CD8-positive, alpha-beta T cell (primary cell): ENCODE measurements at regions of chr2 and their contacts with region 1.

Region 1: GRCh38 chr2:27032495-27033252 is at the start of gene TMEM214:
- DNase-seq: peak; percentile 44 to 87 (median 77)
- ATAC-seq: peak; percentile 94
- H3K4me3 ChIP-seq: peak within 1 kb of the TSS; percentile 84 to 97
- H3K4me3 Mint-ChIP-seq: peak within 1 kb of the TSS; percentile 95
- H3K27ac ChIP-seq: peak within 1 kb of the TSS; percentile 67 to 78
- H3K27ac Mint-ChIP-seq: peak within 1 kb of the TSS; percentile 91
- H3K4me1 ChIP-seq: peaks cover 20% of the 10 kb centered on the region
- H3K4me1 Mint-ChIP-seq: peaks cover 39% of the 10 kb centered on the region
- H3K27me3 ChIP-seq: no peaks in the 10 kb centered on the region
- H3K27me3 Mint-ChIP-seq: no peaks in the 10 kb centered on the region
- CTCF ChIP-seq: no peak
- total RNA-seq, gene TMEM214: 26.5 to 27.4 TPM

Region 2: GRCh38 chr2:27050281-27050995 is 17.8 kb after region 1 on chr2:
- CTCF ChIA-PET with region 1: interaction called, 3 read pairs
- POLR2A ChIA-PET with region 1: interaction called, 25 read pairs
- intact Hi-C with region 1: loop called (anchors 1 kb)
- DNase-seq: peak; percentile 85 to 97 (median 93)
- ATAC-seq: peak; percentile 64
- H3K4me3 ChIP-seq: peak overlapping the region; percentile 78 to 83
- H3K4me3 Mint-ChIP-seq: peak overlapping the region; percentile 99
- H3K27ac ChIP-seq: peak overlapping the region; percentile 74 to 88
- H3K27ac Mint-ChIP-seq: peak overlapping the region; percentile 99
- H3K4me1 ChIP-seq: peaks cover 10% of the 10 kb centered on the region
- H3K4me1 Mint-ChIP-seq: peaks cover 9% of the 10 kb centered on the region
- H3K27me3 ChIP-seq: no peaks in the 10 kb centered on the region
- H3K27me3 Mint-ChIP-seq: peaks cover 2% of the 10 kb centered on the region
- CTCF ChIP-seq: peak; percentile 28

Region 3: GRCh38 chr2:27079233-27080139 is 46.8 kb after region 1 on chr2:
- CTCF ChIA-PET with region 1: no interaction called
- POLR2A ChIA-PET with region 1: interaction called, 5 read pairs
- intact Hi-C with region 1: loop called (anchors 1 to 2 kb)
- DNase-seq: no peak
- ATAC-seq: no peak
- H3K4me3 ChIP-seq: no peak overlapping the region
- H3K4me3 Mint-ChIP-seq: no peak overlapping the region
- H3K27ac ChIP-seq: no peak overlapping the region
- H3K27ac Mint-ChIP-seq: no peak overlapping the region
- H3K4me1 ChIP-seq: peaks cover 37% of the 10 kb centered on the region
- H3K4me1 Mint-ChIP-seq: peaks cover 34% of the 10 kb centered on the region
- H3K27me3 ChIP-seq: no peaks in the 10 kb centered on the region
- H3K27me3 Mint-ChIP-seq: no peaks in the 10 kb centered on the region
- CTCF ChIP-seq: no peak

Region 4: DNA sequence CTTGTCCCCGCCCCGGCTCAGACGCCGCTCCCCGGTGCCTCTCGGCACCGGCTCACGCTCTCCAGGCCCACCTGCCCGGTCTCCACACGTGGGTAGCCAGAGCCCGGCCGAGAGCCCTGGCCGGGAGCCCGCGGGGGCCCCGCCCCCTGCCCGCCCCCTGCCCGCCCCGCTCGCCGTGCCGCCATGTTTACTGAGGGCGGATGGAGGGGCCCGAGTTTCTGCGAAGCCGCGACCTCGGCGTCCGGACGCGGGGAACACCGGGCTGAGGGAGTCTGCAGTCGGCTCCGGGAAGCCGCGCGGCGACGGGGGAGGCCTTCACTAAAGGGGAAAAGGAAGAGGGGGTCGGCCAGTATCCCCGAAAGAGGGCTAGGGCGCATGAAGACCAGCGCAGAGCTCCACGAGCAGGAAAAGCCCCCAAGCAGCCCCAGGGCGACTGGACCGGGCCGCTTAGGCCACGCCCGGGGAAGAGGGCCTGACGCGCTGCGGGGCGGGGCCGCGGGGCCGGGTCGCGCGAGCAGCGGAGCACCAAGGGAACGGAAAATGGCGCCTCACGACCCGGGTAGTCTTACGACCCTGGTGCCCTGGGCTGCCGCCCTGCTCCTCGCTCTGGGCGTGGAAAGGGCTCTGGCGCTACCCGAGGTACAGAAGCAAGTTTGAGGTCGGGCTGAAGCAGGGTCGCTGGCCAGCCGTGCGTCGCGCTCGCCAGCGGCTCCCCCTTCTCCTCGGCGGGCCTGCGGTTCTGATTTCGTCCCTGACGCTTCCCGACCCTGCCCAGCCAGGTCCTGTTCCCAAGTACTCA is 179.4 kb after region 1 on chr2 and contains the starts of genes ATRAID and SLC5A6:
- CTCF ChIA-PET with region 1: no interaction called
- POLR2A ChIA-PET with region 1: interaction called, 3 read pairs
- intact Hi-C with region 1: loop called (anchors 1 to 5 kb)
- DNase-seq: peak; percentile 78 to 94 (median 87)
- ATAC-seq: peak; percentile 84
- H3K4me3 ChIP-seq: peak within 1 kb of the TSS; percentile 67 to 99
- H3K4me3 Mint-ChIP-seq: peak within 1 kb of the TSS; percentile 100
- H3K27ac ChIP-seq: peak within 1 kb of the TSS; percentile 97 to 100
- H3K27ac Mint-ChIP-seq: peak within 1 kb of the TSS; percentile 100
- H3K4me1 ChIP-seq: peaks cover 26% of the 10 kb centered on the region
- H3K4me1 Mint-ChIP-seq: peaks cover 44% of the 10 kb centered on the region
- H3K27me3 ChIP-seq: no peaks in the 10 kb centered on the region
- H3K27me3 Mint-ChIP-seq: no peaks in the 10 kb centered on the region
- CTCF ChIP-seq: no peak
- total RNA-seq, gene ATRAID: 70.0 to 71.7 TPM
- total RNA-seq, gene SLC5A6: 410 to 431 TPM

Region 5: GRCh38 chr2:27322766-27323595 is 290.3 kb after region 1 on chr2 and contains the start of gene MPV17:
- CTCF ChIA-PET with region 1: no interaction called
- POLR2A ChIA-PET with region 1: no interaction called
- intact Hi-C with region 1: loop called in 1 of 2 experiments (anchors 5 kb)
- DNase-seq: peak; percentile 65 to 93 (median 87)
- ATAC-seq: peak; percentile 96
- H3K4me3 ChIP-seq: peak within 1 kb of the TSS; percentile 80 to 81
- H3K4me3 Mint-ChIP-seq: peak within 1 kb of the TSS; percentile 99
- H3K27ac ChIP-seq: peak within 1 kb of the TSS; percentile 89 to 94
- H3K27ac Mint-ChIP-seq: peak within 1 kb of the TSS; percentile 99
- H3K4me1 ChIP-seq: peaks cover 9% of the 10 kb centered on the region
- H3K4me1 Mint-ChIP-seq: peaks cover 25% of the 10 kb centered on the region
- H3K27me3 ChIP-seq: no peaks in the 10 kb centered on the region
- H3K27me3 Mint-ChIP-seq: no peaks in the 10 kb centered on the region
- CTCF ChIP-seq: no peak
- total RNA-seq, gene MPV17: 23.6 to 26.0 TPM